ENCODE measurements at regions of chr10 and their contacts with region 1.

Region 1: GRCh38 chr10:13206546-13207443 is 27.4 kb downstream of the UCMA start:
- DNase-seq: no peak
- H3K4me3 Mint-ChIP-seq: no peak overlapping the region
- H3K27ac Mint-ChIP-seq: no peak overlapping the region
- H3K4me1 Mint-ChIP-seq: no peaks in the 10 kb centered on the region
- H3K27me3 Mint-ChIP-seq: no peaks in the 10 kb centered on the region
- CTCF ChIP-seq: no peak

Region 2: DNA sequence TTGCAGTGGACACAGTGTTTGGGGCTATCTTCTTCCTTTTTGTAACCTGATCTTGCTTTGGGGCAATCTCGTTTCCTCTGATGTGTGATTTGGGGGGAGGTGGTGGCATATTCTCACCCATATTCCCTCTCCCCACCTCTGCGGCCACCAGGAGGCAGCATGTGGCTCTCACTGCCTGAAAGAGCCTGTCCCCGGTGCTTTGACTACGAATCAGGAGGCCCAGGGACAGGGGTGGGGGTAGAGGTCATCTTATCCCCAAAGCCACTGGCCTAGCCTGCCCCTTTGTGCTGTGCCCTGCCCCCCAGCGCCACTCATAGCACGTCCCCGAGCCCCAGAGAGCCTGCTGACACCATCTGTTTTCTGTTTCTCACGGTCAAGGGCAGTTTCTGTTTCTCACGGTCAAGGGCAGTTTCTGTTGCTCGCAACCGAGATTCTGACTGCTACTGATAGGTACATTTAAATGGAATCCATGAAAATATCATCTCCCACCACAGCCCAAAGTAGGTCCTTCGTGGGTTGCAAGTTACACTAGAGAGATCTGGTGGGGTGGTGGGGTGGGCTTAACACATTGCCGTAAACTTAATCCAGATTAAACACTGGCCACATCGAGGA is 64.9 kb after region 1 on chr10:
- CTCF ChIA-PET with region 1: no interaction called
- intact Hi-C with region 1: loop called (anchors 10 kb)
- DNase-seq: peak; percentile 54
- H3K4me3 Mint-ChIP-seq: no peak overlapping the region
- H3K27ac Mint-ChIP-seq: no peak overlapping the region
- H3K4me1 Mint-ChIP-seq: peaks cover 14% of the 10 kb centered on the region
- H3K27me3 Mint-ChIP-seq: no peaks in the 10 kb centered on the region
- CTCF ChIP-seq: peak; percentile 54

Measured in Calu3 (cell line).